ENCODE measurements at regions of chr16 and their contacts with region 1.

Region 1: DNA sequence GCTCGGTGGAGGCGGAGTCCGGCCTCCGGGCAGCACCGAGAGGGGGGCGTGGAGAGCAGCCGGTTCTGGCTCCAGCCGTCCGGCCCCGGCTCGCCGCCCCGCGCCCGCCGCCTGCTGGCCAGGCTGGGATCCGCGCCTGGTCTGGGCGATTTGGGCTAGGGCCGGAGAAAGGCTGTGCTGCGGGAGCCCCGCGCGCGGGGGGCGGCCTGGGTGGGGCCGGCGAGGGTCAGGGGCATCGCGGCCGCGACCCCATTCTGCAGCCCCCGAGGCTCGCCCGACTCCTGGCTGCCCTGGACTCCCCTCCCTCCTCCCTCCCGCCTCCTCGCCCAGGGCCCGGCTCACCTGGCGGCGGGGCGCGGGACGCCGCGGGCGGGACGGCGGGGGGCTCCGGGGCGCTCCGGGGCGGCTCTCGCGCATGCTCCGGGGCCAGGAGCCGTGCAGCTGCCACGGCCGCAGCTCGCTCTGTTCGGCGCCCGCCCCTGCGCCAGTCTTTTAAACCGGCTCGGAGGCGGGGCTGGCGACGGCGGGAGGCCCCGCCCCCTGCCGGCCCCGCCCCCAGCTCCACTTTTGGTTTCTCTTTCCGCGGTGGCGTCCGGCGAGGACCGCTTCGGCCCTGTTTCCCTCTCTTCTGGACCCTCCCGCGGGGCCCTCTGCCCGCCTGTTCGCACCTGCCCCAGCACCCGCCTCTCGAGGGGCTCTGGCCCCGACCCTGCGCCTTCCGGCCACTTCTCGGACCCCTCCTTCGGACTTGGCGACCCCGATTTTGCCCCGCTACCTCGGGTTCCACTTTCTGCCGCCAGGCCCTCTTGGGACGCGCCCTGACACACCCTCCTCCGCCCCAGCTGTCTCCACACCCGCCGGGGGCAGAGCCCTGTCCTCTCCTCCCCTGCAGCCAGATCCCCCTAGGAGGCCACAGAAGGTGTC is at the start of gene SOCS1:
- DNase-seq: no peak
- ATAC-seq: peak; percentile 85
- H3K4me3 ChIP-seq: peak within 1 kb of the TSS; percentile 70 to 78
- H3K27ac ChIP-seq: peak within 1 kb of the TSS; percentile 83
- H3K4me1 ChIP-seq: peaks cover 15% of the 10 kb centered on the region
- H3K27me3 ChIP-seq: no peaks in the 10 kb centered on the region
- CTCF ChIP-seq: peak; percentile 98
- total RNA-seq, gene SOCS1: 4.8 TPM

Region 2: DNA sequence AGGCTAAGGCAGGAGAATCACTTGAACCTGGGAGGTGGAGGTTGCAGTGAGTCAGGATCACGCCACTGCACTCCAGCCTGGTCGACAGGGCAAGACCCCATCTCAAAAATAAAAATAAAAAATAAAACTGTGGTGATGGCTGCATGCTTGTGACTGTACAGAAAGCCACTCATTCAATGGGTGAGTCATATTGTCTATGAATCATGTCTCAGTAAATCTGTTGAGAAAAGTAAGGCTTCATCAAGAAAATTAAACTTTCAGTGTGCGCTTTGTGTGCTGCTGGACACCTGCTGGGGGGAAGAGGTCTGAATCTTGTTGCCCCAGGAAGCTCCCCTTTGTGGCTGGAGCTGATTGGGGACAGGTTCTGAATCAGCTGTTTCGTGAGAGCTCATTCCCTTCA is 501.1 kb before region 1 on chr16:
- CTCF ChIA-PET with region 1: no interaction called
- POLR2A ChIA-PET with region 1: no interaction called
- in situ Hi-C with region 1: no loop called
- intact Hi-C with region 1: no loop called
- DNase-seq: no peak
- ATAC-seq: peak; percentile 77; the same call in 1 of the 2 replicates
- H3K4me3 ChIP-seq: no peak overlapping the region
- H3K27ac ChIP-seq: no peak overlapping the region
- H3K4me1 ChIP-seq: no peaks in the 10 kb centered on the region
- H3K27me3 ChIP-seq: no peaks in the 10 kb centered on the region
- CTCF ChIP-seq: no peak

Region 3: GRCh38 chr16:10949370-10949970 is 306.5 kb before region 1 on chr16:
- CTCF ChIA-PET with region 1: interaction called, 11 read pairs
- POLR2A ChIA-PET with region 1: no interaction called
- in situ Hi-C with region 1: no loop called
- intact Hi-C with region 1: loop called (anchors 5 kb)
- DNase-seq: no peak
- ATAC-seq: peak; percentile 37; the same call in 1 of the 2 replicates
- H3K4me3 ChIP-seq: no peak overlapping the region
- H3K27ac ChIP-seq: no peak overlapping the region; the same call in 1 of the 2 replicates
- H3K4me1 ChIP-seq: peaks cover 34% of the 10 kb centered on the region
- H3K27me3 ChIP-seq: no peaks in the 10 kb centered on the region
- CTCF ChIP-seq: no peak

Region 4: GRCh38 chr16:10964039-10964890 is 291.7 kb before region 1 on chr16:
- CTCF ChIA-PET with region 1: interaction called, 10 read pairs
- POLR2A ChIA-PET with region 1: interaction called, 3 read pairs
- in situ Hi-C with region 1: no loop called
- intact Hi-C with region 1: no loop called
- DNase-seq: no peak
- ATAC-seq: peak; percentile 95
- H3K4me3 ChIP-seq: peak overlapping the region in 1 of 2 experiments; percentile 5; a peak in 1 of 4 replicates
- H3K27ac ChIP-seq: no peak overlapping the region
- H3K4me1 ChIP-seq: no peaks in the 10 kb centered on the region
- H3K27me3 ChIP-seq: no peaks in the 10 kb centered on the region
- CTCF ChIP-seq: peak; percentile 97

Region 5: GRCh38 chr16:10971560-10971961 is 284.4 kb before region 1 on chr16:
- CTCF ChIA-PET with region 1: interaction called, 17 read pairs
- POLR2A ChIA-PET with region 1: interaction called, 6 read pairs
- in situ Hi-C with region 1: no loop called
- intact Hi-C with region 1: loop called (anchors 1 kb)
- DNase-seq: peak; percentile 41
- ATAC-seq: peak; percentile 82
- H3K4me3 ChIP-seq: no peak overlapping the region
- H3K27ac ChIP-seq: no peak overlapping the region
- H3K4me1 ChIP-seq: no peaks in the 10 kb centered on the region
- H3K27me3 ChIP-seq: no peaks in the 10 kb centered on the region
- CTCF ChIP-seq: peak; percentile 86

Region 6: DNA sequence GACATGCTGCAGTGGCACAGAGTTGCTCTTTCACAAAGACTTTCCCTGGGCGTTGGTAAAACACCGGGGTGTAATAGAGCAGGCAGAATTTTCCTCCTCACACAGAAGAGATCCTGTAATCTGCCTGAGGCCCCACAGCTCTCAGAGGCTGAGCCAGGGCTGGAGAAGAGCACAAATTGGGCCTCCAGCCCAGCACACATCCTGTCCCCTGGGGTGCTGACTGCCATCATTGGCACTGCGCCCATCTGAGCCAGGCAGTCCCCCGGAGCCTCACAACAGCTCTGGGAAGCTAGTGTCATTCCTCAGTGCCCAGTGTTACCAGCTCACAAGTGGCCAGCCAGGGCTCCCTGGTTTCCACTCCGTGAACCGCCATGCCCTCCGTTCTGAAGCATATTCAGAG is 119.4 kb before region 1 on chr16:
- CTCF ChIA-PET with region 1: interaction called, 6 read pairs
- POLR2A ChIA-PET with region 1: interaction called, 13 read pairs
- in situ Hi-C with region 1: no loop called
- intact Hi-C with region 1: no loop called
- DNase-seq: no peak
- ATAC-seq: peak; percentile 57
- H3K4me3 ChIP-seq: no peak overlapping the region
- H3K27ac ChIP-seq: no peak overlapping the region; the same call in 1 of the 2 replicates
- H3K4me1 ChIP-seq: peaks cover 35% of the 10 kb centered on the region
- H3K27me3 ChIP-seq: no peaks in the 10 kb centered on the region
- CTCF ChIP-seq: no peak

Region 7: DNA sequence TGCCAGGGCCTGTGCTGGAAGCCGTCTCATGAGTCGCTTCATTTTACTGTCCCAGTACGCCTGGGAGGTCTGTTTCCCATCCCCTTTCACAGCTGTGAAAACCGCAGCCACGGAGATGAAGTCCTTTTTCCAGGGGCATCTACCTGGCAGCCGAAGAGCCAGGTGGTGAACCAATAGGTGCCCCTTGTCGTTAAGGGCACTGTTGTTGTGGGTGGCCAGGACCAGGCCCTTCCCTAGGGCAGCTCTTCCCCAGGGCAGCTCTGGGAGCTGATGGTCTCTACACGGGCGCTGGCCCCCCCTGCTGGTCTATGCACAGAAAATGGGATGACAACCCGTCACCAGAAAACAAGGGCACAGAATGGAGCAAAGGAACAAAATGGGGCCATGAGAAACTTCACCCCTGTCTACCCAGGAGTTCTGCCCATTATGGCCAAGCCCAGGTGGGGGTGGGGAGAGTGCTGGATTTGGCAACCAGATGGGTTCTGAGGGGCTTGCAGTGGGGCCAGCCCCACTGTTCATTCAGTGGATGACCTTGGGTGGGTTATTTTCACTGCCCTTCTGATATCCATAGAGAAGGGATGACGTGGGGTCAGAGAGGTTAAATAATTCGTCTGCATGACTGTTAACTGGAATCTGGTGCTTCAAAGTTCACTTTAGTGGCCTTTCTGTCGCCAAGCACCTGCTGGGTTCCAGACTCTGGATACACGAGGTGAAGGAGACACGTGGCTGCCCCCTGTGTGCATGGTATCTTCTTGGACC is 100.8 kb after region 1 on chr16:
- CTCF ChIA-PET with region 1: interaction called, 7 read pairs
- POLR2A ChIA-PET with region 1: no interaction called
- in situ Hi-C with region 1: no loop called
- intact Hi-C with region 1: loop called (anchors 5 kb)
- DNase-seq: no peak
- ATAC-seq: peak; percentile 92
- H3K4me3 ChIP-seq: no peak overlapping the region
- H3K27ac ChIP-seq: no peak overlapping the region
- H3K4me1 ChIP-seq: no peaks in the 10 kb centered on the region; the same call in 1 of the 2 replicates
- H3K27me3 ChIP-seq: no peaks in the 10 kb centered on the region
- CTCF ChIP-seq: peak; percentile 88

Measured in Panc1 (cell line).